ENCODE measurements at regions of chr5 and their contacts with region 1.

Region 1: DNA sequence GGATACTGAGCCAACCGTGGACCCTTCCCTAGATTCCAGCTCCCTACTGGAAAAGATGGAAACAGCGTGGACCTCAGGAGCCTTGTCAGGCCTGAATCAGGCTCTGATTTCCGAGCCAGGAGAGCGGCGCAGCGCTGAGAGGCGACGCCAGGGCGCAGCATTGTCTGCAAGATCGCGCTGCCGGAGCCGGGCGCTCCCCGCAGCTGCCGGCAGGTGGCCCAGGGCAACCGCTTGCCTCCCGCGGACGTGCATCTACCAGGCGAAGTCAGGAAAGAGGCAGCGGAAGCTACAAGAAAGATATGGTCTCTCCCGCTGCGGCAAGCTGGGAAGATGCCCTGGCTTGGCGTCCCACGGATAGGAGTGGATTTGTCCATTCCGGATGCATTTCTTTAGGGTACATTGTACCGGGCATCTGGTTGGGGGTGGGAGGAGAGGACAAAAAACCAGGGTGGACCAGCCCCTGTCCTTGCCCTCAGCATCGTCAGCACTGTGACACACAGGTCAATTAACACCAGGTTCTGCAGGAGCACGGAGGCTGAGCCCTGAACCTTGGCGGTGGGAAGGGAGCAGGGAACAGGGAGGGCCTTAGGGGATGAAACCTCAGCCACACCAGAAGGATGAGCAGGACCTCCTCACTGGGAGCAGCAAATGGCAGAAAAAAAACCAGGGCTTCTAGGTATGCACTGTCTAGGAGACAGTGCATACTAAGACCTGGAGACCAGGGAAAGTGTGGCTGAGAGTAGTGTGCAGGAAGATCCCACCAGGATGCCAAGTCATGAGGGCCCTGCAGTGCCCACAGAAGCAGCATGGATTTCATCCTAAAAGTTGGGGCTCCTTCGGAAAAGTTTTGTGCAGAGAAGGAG is 55.9 kb downstream of the SFXN1 start:
- DNase-seq: peak; percentile 86
- CTCF ChIP-seq: peak; percentile 95

Region 2: DNA sequence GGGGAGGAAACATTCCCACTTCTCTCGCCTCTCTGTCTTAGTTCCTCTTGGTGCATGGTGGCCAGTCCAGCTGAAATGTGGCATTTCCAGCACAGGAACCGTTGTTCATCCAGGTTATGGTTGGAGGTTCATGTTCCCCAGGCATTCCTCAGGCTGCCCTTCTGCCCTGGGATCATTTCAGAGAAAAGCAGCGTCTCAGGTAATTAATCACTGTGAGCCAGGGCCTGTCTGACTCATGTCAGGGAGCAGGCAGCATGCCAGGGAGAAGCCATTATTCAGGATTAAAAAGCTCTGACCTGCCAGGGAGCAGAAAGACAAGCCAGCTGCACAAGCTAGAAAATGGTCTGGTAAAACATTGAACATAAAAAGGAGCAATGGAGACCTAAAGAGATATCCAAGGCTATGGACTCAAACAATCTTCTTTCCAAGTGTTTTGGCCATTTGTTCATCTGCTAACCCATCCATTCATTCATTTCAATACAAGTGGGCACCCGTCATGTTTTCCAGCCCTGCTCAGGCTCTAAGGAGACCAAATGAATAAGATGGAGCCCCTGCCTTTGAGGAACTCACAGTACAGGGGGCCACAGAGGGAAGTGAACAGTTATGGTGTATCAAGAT is 331.7 kb before region 1 on chr5:
- in situ Hi-C with region 1: no loop called
- DNase-seq: no peak
- CTCF ChIP-seq: no peak

Region 3: DNA sequence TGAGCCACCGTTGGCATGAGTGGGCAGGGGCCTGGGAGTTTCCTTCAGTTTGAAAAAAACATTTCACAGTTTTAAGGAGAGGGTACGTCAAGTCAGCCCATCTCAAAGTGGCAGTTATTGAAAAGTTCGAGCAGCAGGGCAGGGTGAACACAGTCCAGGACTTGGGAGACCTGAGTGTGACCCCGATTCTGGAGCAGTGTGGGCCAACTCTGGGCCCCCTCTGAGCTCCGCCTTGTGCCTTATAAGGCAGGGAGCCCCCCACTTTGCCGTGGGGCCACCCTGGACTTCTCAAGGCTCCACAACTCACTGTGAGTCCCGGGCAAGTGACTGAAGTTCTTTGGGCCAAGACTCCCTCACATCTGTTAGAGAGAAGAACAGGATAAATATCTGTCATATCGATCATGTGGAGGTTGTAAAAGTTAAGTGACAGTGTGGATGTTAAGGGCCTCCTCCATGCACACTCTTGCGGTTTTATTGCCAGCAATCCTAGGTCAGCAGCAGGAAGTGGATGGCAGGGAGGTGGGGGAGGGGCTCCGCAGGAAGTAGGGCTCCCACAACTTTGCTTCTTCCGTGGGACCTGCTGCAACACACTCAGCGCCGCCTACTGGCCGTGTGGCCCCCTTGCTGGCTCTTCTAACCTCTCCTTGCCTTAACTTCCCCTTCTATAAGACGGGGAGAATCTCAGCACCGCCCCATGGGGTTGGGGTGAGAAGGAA is 162.0 kb after region 1 on chr5:
- in situ Hi-C with region 1: loop called (anchors 10 kb)
- DNase-seq: peak; percentile 70
- CTCF ChIP-seq: peak; percentile 31

Measured in GM13976 (cell line).